Activated CD4-positive, alpha-beta memory T cell treated with anti-CD3 and anti-CD28 coated beads for 36 hours (primary cell): ENCODE measurements at regions of chr3 and their contacts with region 1.

Region 1: DNA sequence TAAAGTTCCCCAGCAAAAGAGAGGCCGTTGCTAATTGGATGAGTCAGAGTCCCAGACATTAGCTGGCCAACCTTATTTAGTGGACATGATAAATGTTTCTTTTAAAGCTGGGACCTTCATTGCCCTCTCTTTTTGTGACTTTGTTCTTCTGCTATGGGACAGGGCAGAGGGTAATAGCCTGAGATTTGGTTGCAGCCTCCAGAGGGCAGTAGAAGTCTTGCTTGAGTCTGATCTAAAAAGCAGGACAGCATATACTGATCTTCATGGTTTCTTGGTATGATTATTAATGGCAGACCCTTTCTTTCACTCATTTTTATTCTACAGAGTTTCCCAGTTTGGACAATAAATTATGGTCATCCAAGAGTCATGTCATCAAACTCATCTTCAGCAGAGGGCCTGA is 25.1 kb upstream of the ZKSCAN7 start:
- DNase-seq: peak; percentile 23
- H3K4me3 Mint-ChIP-seq: no peak overlapping the region
- H3K27ac Mint-ChIP-seq: no peak overlapping the region
- H3K4me1 Mint-ChIP-seq: no peaks in the 10 kb centered on the region
- H3K27me3 Mint-ChIP-seq: peaks cover 13% of the 10 kb centered on the region

Region 2: GRCh38 chr3:44235604-44236484 is 294.1 kb before region 1 on chr3:
- CTCF ChIA-PET with region 1: no interaction called
- POLR2A ChIA-PET with region 1: no interaction called
- intact Hi-C with region 1: no loop called
- DNase-seq: peak; percentile 67
- H3K4me3 Mint-ChIP-seq: no peak overlapping the region
- H3K27ac Mint-ChIP-seq: no peak overlapping the region
- H3K4me1 Mint-ChIP-seq: peaks cover 4% of the 10 kb centered on the region
- H3K27me3 Mint-ChIP-seq: peaks cover 8% of the 10 kb centered on the region

Region 3: DNA sequence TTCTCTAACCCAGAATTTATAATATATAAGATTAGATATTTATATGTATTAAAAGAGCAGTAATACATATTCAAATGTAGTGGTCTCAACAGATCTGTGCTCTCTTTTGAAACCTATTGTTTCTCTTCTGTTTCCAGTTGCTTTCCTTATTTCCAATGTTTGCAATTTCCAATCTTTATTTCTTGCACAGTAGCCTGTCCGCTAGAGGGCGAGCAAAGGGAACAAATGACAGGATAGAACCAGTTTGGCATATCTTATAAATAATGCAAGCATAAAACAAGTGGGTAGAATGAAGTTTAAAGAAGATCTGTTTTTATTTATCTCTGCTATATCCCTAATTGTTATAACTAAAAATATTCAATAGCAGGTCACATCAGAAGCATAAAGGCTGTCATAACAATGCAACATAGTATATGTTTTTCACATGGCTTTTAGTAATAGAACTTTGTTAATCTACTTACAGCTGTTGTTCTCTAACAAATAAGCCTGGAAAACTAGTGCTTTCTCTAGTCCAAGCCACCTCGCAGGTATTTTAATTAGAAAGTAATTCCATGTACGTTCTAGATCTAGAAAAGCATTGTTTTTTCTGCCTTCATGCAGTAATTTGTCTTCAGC is 206.5 kb before region 1 on chr3:
- CTCF ChIA-PET with region 1: interaction called, 13 read pairs
- POLR2A ChIA-PET with region 1: no interaction called
- intact Hi-C with region 1: loop called (anchors 5 kb)
- DNase-seq: peak; percentile 65
- H3K4me3 Mint-ChIP-seq: no peak overlapping the region
- H3K27ac Mint-ChIP-seq: no peak overlapping the region
- H3K4me1 Mint-ChIP-seq: no peaks in the 10 kb centered on the region
- H3K27me3 Mint-ChIP-seq: peaks cover 6% of the 10 kb centered on the region

Region 4: GRCh38 chr3:44624749-44625480 is 95.0 kb after region 1 on chr3 and contains the start of gene ZNF197:
- CTCF ChIA-PET with region 1: interaction called, 14 read pairs
- POLR2A ChIA-PET with region 1: no interaction called
- intact Hi-C with region 1: no loop called
- DNase-seq: peak; percentile 78
- H3K4me3 Mint-ChIP-seq: peak within 1 kb of the TSS; percentile 80
- H3K27ac Mint-ChIP-seq: peak within 1 kb of the TSS; percentile 47
- H3K4me1 Mint-ChIP-seq: peaks cover 20% of the 10 kb centered on the region
- H3K27me3 Mint-ChIP-seq: no peaks in the 10 kb centered on the region
- total RNA-seq, gene ZNF197: 9.1 to 9.9 TPM

Region 5: DNA sequence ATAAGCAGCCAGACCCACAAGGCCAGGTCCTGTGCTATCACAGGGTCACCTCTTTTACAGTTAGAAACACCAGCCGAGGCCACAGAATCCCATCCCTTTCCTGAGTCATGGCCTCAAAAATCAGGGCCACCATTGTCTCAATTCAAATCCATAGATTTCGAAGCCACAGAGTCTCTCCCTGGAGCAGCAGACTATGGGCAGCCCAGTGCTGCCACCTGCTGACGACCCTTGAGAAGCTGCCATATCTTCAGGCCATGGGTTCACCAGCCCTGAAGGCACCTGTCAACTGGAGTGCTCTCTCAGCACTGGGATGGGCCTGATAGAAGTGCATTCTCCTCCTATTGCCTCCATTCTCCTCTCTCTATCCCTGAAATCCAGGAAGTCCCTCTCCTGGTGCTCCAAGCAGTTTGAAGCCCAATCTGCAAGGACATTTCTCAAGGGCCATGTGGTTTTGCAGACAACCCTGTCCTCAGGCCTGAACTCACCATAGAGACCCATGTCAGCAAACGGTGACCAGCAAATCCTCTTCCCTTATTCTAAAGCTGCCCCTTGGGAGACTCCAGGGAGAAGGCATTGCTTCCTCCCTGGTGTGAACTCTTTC is 384.0 kb after region 1 on chr3:
- CTCF ChIA-PET with region 1: interaction called, 59 read pairs
- POLR2A ChIA-PET with region 1: no interaction called
- intact Hi-C with region 1: loop called (anchors 1 kb)
- DNase-seq: peak; percentile 73
- H3K4me3 Mint-ChIP-seq: no peak overlapping the region
- H3K27ac Mint-ChIP-seq: no peak overlapping the region
- H3K4me1 Mint-ChIP-seq: no peaks in the 10 kb centered on the region
- H3K27me3 Mint-ChIP-seq: peaks cover 23% of the 10 kb centered on the region

Region 6: GRCh38 chr3:45283471-45283870 is 753.5 kb after region 1 on chr3:
- CTCF ChIA-PET with region 1: no interaction called
- POLR2A ChIA-PET with region 1: no interaction called
- intact Hi-C with region 1: no loop called
- DNase-seq: no peak
- H3K4me3 Mint-ChIP-seq: no peak overlapping the region
- H3K27ac Mint-ChIP-seq: no peak overlapping the region
- H3K4me1 Mint-ChIP-seq: no peaks in the 10 kb centered on the region
- H3K27me3 Mint-ChIP-seq: peaks cover 27% of the 10 kb centered on the region